Sciatic nerve (tissue), 2 donors: ENCODE measurements at regions of chr19 and their contacts with region 1.

Region 1: GRCh38 chr19:12763100-12763499 is 11.5 kb downstream of the BEST2 start:
- DNase-seq: no peak
- ATAC-seq: peak; percentile 9

Region 2: DNA sequence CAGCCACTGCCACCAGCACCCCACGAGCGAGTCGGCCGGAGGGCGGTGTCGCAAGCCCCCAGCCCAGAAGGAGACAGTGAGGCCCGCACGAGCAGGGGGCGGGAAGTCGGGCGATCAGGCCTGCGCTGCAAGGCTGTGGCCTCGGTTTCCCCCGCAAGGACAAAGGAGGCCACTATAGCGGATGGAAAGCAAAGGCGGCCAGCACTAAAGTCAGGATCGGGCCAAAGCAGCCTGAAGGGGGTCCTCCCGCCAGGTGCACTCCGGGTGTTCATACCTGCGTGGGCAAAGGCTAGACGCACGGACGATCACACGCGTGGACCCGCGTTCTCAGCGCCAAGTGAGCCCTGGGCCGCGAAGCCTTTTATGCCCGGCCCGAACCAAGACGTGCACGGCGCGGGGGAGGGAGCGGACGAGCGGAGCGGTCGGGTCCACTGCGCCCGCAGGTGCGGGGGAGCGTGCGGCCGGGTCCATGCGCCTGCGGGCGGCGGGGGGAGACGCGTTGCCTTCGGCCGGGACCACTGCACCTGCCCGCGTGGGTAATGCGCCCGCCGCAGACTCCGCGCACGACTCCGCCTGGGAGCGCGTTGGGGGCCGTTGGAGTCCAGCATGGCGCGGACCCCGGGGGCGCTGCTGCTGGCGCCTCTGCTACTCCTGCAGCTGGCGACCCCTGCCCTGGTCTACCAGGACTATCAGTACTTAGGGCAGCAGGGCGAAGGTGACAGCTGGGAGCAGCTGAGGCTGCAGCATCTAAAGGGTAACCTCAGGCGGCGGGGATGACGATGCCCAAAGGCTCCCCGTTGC is 38.6 kb after region 1 on chr19 and contains the starts of genes PRDX2 and THSD8:
- intact Hi-C with region 1: loop called (anchors 5 kb)
- DNase-seq: peak; percentile 87
- ATAC-seq: peak; percentile 85
- total RNA-seq, gene PRDX2: 117 TPM
- total RNA-seq, gene THSD8: 2.4 TPM